Aorta (tissue), 5 donors: ENCODE measurements at regions of chr13 and their contacts with region 1.

Region 1: GRCh38 chr13:54658771-54659170 is 1630.2 kb downstream of the OLFM4 start:
- DNase-seq: no peak
- ATAC-seq: peak; percentile 45
- H3K4me3 ChIP-seq: no peak overlapping the region
- H3K27ac ChIP-seq: no peak overlapping the region
- H3K4me1 ChIP-seq: no peaks in the 10 kb centered on the region
- H3K27me3 ChIP-seq: no peaks in the 10 kb centered on the region

Region 2: GRCh38 chr13:54433493-54434206 is 225.1 kb before region 1 on chr13:
- intact Hi-C with region 1: no loop called
- DNase-seq: no peak
- ATAC-seq: no peak
- H3K4me3 ChIP-seq: no peak overlapping the region
- H3K27ac ChIP-seq: no peak overlapping the region
- H3K4me1 ChIP-seq: no peaks in the 10 kb centered on the region
- H3K27me3 ChIP-seq: no peaks in the 10 kb centered on the region

Region 3: GRCh38 chr13:54709572-54709971 is 50.8 kb after region 1 on chr13:
- intact Hi-C with region 1: loop called in 1 of 2 experiments (anchors 5 kb)
- DNase-seq: no peak
- ATAC-seq: no peak
- H3K4me3 ChIP-seq: no peak overlapping the region
- H3K27ac ChIP-seq: no peak overlapping the region
- H3K4me1 ChIP-seq: no peaks in the 10 kb centered on the region
- H3K27me3 ChIP-seq: no peaks in the 10 kb centered on the region

Region 4: GRCh38 chr13:55069746-55070145 is 411.0 kb after region 1 on chr13:
- intact Hi-C with region 1: no loop called
- DNase-seq: no peak
- ATAC-seq: no peak
- H3K4me3 ChIP-seq: no peak overlapping the region
- H3K27ac ChIP-seq: no peak overlapping the region
- H3K4me1 ChIP-seq: no peaks in the 10 kb centered on the region
- H3K27me3 ChIP-seq: no peaks in the 10 kb centered on the region